Left colon (tissue), 2 donors: ENCODE measurements at regions of chr2 and their contacts with region 1.

Region 1: GRCh38 chr2:1675633-1676032 is 68.7 kb downstream of the PXDN start:
- DNase-seq: peak in 1 of 2 donors; percentile 70
- ATAC-seq: peak; percentile 26

Region 2: DNA sequence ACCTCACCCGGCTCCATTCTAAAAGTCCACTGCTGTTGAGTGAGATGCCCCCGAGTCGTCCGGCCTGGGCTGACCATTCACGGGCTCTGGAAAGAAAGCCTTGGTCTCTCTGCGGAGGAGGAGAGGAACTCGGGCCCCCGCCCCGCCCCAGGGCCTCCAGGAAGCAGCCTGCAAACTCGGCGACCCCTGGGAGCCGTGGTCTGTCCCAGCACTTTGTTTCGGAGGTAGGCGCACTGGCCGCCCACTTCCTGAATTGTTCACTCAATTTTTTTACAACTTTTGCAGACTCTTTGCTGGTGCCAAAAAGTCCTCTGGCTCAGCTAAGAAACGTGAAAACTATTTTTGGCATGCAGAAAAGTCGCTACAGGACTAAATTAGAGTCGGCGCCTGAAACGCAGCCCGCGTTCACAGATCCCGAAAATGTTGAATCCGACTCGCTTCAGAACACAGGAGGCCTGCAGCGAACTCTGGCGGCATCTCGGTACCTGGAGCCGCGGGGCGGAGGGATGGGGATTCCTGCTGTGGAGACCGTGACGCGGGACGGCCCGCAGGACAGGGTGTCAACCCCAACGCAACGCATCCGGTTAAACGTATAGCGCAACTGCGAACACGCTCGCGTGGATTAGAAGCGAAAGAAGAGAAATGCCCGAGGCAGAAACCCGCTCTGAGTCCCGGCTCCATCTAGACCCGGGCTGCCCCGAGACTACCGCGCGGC is 67.2 kb after region 1 on chr2:
- intact Hi-C with region 1: loop called in 1 of 2 experiments (anchors 10 kb)
- DNase-seq: peak; percentile 59 to 73
- ATAC-seq: peak; percentile 69